ENCODE measurements at regions of chr21 and their contacts with region 1.

Region 1: DNA sequence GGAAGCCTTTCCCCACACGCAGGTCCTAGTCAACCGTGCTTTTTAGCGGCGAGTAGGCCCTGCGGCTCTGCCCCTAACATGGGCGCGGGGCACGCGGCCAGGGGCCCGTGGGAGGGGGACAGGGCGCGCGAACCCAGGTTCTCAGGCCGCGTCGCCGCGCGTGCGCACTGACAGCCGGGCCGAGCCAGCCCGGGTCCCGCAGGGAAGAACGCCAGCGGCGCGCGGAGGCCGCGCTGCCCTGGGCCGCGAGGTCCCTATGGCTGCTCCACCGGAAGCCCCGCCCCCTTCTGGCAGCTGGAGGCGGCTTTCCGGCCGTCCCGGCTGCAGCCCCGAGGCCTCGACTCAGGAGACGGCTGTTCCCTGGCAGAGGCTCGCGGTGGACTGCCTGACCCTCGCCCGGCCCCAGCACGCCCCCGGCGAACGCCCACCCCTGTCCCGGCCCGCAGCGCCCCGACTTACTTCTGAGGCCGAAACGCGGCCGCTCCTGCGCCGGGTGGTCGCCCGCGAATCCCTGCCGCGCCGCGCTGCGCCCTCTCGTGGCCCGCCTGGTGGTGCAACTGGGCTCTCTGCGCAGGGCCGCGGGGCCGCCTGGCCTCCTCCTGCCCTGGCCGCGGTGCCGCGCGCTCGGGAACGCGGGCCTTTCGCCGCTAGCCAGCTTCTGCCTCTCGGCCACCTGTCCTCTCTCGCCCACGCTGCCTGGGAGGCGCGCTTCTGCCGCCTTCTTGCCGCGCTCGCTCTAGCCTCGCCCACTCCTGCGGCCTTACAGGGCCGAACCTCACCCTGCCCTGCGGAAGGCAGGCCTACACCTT is 16.6 kb upstream of the RIPPLY3 start:
- DNase-seq: peak; percentile 87
- ATAC-seq: peak; percentile 94
- H3K4me3 Mint-ChIP-seq: peak overlapping the region; percentile 78
- H3K27ac Mint-ChIP-seq: peak overlapping the region; percentile 87
- H3K4me1 Mint-ChIP-seq: peaks cover 44% of the 10 kb centered on the region
- H3K27me3 Mint-ChIP-seq: no peaks in the 10 kb centered on the region

Region 2: DNA sequence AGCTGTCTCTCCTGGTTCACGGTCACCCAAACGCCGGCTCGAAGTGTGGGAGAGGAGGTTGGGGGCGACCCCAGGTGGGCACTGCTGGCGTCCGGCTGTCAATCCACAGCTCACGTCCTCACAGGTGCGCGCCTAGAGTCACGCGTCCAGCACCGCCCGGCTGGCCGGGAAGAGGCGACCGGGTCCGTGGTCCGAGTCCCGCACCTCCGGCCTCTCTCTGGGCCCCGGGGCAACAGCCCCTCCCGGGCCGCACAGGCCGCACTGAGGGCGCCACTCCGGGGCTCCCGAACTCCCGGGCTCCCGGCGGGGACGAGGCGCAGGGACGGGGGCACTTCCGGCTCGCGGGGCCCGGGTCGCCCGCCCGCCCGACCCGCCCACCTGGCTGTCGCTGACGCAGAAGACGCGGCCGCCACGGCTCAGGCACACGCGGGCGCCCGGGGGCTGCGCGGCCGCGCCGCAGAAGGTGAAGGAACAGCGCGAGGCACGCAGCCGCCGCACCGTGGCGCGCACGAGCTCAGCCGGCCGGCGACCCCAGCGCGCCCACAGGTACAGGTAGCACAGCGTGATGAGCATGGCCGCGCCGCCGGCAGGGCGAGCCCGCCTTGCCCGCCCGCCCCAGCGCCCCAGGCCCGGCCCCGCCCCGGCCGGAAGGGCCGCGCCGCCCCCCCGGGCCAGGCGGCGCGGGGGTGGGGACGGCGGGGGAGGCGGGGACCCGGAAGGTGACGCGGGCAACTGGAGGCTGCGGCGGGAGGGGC is 23.7 kb before region 1 on chr21 and contains the start of gene HLCS:
- CTCF ChIA-PET with region 1: interaction called, 17 read pairs
- POLR2A ChIA-PET with region 1: interaction called, 3 read pairs
- DNase-seq: peak; percentile 80
- ATAC-seq: peak; percentile 93
- H3K4me3 Mint-ChIP-seq: peak within 1 kb of the TSS; percentile 88
- H3K27ac Mint-ChIP-seq: peak within 1 kb of the TSS; percentile 90
- H3K4me1 Mint-ChIP-seq: peaks cover 21% of the 10 kb centered on the region
- H3K27me3 Mint-ChIP-seq: no peaks in the 10 kb centered on the region
- total RNA-seq, gene HLCS: 15.5 to 16.8 TPM

Region 3: DNA sequence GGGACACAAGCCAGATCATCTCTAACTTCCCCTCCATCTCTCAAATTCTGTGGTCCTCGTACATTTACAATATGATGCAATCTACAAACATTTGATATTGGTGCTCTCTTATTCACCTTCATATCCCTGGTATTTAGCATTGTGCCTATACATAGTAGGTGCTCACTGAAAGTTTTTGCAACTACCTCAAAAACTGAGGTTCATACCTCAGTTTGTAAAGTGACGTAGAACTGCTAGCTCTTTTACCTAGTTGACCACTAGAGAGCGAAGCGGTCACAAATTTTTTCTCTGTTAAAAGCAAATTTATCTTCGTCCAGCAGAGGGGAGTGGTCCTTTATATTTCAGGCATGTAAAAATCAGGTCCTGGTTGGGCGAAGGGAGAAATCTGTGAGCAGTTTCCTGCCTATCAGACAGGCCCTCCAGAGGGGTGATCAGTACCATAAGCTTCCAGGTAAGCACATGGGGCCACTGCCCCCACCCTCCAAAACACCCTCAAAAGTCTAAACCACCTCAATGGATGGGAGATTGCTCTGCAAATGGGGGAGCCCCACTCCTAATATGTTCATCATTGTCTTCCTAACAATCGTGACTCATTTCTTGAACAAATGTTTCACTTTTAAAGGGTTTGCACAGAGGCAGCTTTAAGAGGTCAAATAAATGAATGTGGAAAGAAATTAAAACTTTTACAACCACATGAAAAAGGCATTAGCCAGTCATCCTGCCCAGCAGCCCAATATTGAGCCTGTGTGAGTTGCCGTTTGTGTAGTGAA is 12.8 kb before region 1 on chr21:
- CTCF ChIA-PET with region 1: interaction called, 34 read pairs
- POLR2A ChIA-PET with region 1: interaction called, 4 read pairs
- DNase-seq: peak; percentile 56
- ATAC-seq: peak; percentile 65
- H3K4me3 Mint-ChIP-seq: no peak overlapping the region
- H3K27ac Mint-ChIP-seq: peak overlapping the region; percentile 32
- H3K4me1 Mint-ChIP-seq: peaks cover 28% of the 10 kb centered on the region
- H3K27me3 Mint-ChIP-seq: peaks cover 2% of the 10 kb centered on the region

Region 4: DNA sequence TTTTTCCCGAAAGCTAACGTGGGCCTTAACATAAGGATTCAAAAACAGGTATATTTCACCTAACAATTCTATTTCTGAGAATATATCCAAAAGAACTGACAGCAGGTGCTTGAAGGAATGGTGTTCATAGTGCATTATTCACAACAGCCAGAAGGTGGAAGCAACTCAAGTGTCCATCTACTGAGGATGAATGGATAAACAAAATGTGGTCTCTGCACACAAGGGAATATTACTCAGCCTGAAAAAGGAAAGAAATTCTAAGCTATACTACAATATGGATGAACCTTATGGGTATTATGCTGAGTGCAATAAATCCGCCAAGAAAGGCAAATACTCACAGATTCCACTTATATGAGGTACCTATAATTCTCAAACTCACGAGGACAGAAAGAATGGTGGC is 10.5 kb after region 1 on chr21:
- CTCF ChIA-PET with region 1: interaction called, 21 read pairs
- POLR2A ChIA-PET with region 1: no interaction called
- DNase-seq: no peak
- ATAC-seq: no peak
- H3K4me3 Mint-ChIP-seq: no peak overlapping the region
- H3K27ac Mint-ChIP-seq: no peak overlapping the region
- H3K4me1 Mint-ChIP-seq: peaks cover 8% of the 10 kb centered on the region
- H3K27me3 Mint-ChIP-seq: peaks cover 2% of the 10 kb centered on the region

Region 5: DNA sequence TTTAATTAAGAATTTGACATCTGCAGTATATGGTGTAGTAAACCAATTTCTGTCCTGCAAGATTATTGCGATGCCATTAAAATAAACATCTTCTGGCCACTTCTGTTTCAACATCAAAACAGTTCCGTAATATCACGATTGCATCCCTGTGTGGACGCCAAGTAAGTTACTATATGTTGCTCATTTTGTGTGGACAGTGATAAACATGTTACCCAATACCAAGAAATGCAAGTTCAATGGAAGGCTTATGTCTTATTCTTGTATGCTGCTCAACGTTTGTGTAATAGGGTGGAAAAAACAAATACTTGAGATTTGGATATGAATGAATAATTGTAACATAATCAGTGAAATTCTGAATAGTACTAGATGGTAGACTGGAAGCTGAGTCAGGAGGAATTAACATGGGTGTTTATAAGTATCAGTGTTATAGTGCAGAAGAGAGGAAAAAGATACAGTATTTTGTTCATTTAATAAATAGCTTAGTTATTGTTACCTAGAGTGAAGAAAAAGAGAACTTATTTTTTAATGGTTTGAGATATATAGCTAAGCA is 98.4 kb after region 1 on chr21:
- CTCF ChIA-PET with region 1: no interaction called
- POLR2A ChIA-PET with region 1: no interaction called
- DNase-seq: no peak
- ATAC-seq: no peak
- H3K4me3 Mint-ChIP-seq: no peak overlapping the region
- H3K27ac Mint-ChIP-seq: no peak overlapping the region
- H3K4me1 Mint-ChIP-seq: peaks cover 2% of the 10 kb centered on the region
- H3K27me3 Mint-ChIP-seq: no peaks in the 10 kb centered on the region

Measured in activated CD8-positive, alpha-beta T cell treated with anti-CD3 and anti-CD28 coated beads, Interleukin-2, amount 10 ng/mL, durations not matched to agents 7 days and 5 days (primary cell).